GM10248 (cell line): ENCODE measurements at regions of chr9 and their contacts with region 1.

Region 1: GRCh38 chr9:114653556-114654159 is 3.9 kb downstream of the TEX53 start:
- DNase-seq: peak; percentile 77
- CTCF ChIP-seq: peak; percentile 88

Region 2: GRCh38 chr9:114405294-114406034 is 248.2 kb before region 1 on chr9:
- CTCF ChIA-PET with region 1: interaction called, 173 read pairs
- POLR2A ChIA-PET with region 1: interaction called, 3 read pairs
- DNase-seq: peak; percentile 88
- CTCF ChIP-seq: peak; percentile 82

Region 3: GRCh38 chr9:114452219-114453165 is 201.2 kb before region 1 on chr9:
- CTCF ChIA-PET with region 1: interaction called, 11 read pairs
- POLR2A ChIA-PET with region 1: no interaction called
- DNase-seq: peak; percentile 22
- CTCF ChIP-seq: no peak

Region 4: DNA sequence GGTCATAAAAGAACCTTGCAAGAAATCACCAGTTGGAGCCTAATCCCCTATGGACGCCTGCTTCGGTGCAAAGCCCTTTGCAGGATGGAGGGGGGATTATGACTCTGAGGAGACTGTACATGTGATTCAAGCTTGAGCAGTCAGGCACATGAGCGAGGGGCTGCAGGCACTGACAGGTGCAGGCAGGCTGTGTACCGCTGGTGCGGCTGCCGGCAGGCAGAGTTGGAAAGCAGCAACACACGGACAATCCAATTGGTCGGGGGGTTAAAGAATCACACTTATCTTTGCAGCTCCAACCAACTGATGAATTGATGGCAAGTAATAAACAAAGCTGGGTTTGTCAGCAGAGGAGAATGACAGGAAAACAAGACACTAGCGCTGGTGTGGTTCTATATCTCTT is 154.1 kb before region 1 on chr9:
- CTCF ChIA-PET with region 1: interaction called, 11 read pairs
- POLR2A ChIA-PET with region 1: no interaction called
- DNase-seq: no peak
- CTCF ChIP-seq: no peak

Region 5: DNA sequence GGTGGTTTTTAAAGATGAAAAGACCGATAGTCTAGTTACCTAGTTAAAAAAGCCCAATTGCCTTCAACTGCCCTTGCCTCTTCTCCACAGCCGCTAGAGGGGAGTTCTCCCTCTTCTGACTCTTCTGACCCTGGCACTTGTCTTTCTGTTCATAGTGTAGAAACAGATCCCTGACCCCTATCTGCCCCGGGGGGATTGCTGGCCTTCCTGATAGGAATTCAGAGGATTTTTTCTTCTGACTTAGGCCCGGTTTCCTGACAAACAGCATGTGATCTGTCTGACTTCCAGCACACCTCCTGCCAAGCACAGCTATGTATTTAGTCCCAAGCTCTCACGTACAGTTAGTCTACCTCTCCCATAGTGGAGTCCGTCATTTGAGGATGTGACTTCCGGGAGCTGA is 47.6 kb before region 1 on chr9:
- CTCF ChIA-PET with region 1: interaction called, 11 read pairs
- POLR2A ChIA-PET with region 1: no interaction called
- DNase-seq: no peak
- CTCF ChIP-seq: no peak

Region 6: DNA sequence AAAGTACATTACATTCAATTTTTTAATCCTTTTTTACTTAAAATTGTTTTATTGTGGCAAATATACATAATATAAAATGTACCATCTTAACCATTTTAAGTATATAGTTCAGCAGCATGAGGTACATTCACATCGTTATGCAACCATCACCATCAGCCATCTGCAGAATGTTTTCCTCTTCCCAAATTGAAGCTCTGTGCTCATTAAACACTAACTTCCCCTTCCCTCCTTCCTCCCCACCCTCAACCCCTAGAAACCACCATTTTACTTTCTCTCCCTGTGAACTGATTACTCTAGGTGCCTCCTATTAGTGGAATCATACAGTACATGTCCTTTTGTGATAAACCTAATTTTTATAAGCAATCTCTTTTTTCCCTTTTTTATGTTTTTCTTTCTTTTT is 11.7 kb before region 1 on chr9:
- CTCF ChIA-PET with region 1: interaction called, 35 read pairs
- POLR2A ChIA-PET with region 1: no interaction called
- DNase-seq: no peak
- CTCF ChIP-seq: no peak